CD8-positive, alpha-beta memory T cell (primary cell): ENCODE measurements at regions of chr16 and their contacts with region 1.

Region 1: GRCh38 chr16:28943281-28943680 is 7.5 kb upstream of the NFATC2IP start:
- DNase-seq: no peak
- H3K4me3 ChIP-seq: no peak overlapping the region
- H3K4me3 Mint-ChIP-seq: no peak overlapping the region
- H3K27ac ChIP-seq: no peak overlapping the region
- H3K27ac Mint-ChIP-seq: no peak overlapping the region
- H3K4me1 ChIP-seq: peaks cover 10% of the 10 kb centered on the region
- H3K4me1 Mint-ChIP-seq: peaks cover 8 to 9% (median 8%) of the 10 kb centered on the region in 3 donors
- H3K27me3 ChIP-seq: no peaks in the 10 kb centered on the region
- H3K27me3 Mint-ChIP-seq: peaks cover 0 to 5% of the 10 kb centered on the region in 2 donors

Region 2: DNA sequence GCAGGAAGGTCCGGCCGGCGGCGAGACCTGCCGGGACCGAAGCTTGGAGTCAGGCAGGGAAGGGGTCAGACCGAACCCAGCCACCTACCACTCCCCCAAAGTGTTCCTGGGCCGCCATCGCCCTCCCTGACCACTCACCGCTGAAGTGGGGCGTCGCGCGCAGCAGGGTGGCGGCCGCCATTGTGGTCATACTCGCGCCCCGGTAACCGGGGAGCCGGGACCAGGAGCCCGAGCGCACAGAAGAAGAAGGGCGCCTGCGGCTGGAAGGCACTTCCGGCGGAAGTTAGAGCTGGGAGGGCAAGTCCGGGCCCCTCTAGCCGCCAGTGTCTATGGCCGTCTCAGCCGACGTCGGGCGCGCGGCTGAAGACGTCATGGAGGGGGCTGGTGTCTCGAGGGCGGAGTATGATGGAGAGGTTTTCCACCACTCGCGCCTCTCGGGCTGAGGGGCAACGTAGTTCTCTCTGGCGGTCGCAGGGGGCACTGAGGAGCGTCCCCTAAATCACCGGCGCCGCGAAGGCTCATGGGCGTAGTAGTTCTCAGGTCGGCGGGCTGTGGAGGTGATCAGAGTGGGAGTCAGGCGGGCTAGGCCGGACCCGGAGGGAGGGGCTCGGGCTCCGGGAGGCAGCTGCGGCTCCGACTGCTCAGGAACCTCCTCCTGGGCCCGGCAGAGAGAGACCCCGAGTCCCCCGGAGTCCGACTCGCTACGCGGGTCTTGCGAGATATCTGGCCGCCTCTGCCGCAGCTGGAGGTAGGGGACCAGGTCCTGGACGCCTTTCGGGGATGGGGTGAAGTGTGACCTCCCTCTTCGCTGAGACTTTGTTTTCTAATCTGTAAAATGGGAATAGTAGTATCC is 97.0 kb before region 1 on chr16 and contains the start of gene TUFM:
- CTCF ChIA-PET with region 1: interaction called, 13 read pairs
- POLR2A ChIA-PET with region 1: interaction called, 5 read pairs
- DNase-seq: peak; percentile 96 to 99 (median 98)
- H3K4me3 ChIP-seq: peak within 1 kb of the TSS; percentile 90
- H3K4me3 Mint-ChIP-seq: peak within 1 kb of the TSS; percentile 90 to 95 (median 94)
- H3K27ac ChIP-seq: peak within 1 kb of the TSS; percentile 89
- H3K27ac Mint-ChIP-seq: peak within 1 kb of the TSS; percentile 84 to 99 (median 94)
- H3K4me1 ChIP-seq: peaks cover 26% of the 10 kb centered on the region
- H3K4me1 Mint-ChIP-seq: peaks cover 28 to 41% (median 30%) of the 10 kb centered on the region in 3 donors
- H3K27me3 ChIP-seq: no peaks in the 10 kb centered on the region
- H3K27me3 Mint-ChIP-seq: no peaks in the 10 kb centered on the region
- total RNA-seq, gene TUFM: 320 to 347 TPM

Region 3: GRCh38 chr16:28879841-28880588 is 63.3 kb before region 1 on chr16:
- CTCF ChIA-PET with region 1: interaction called, 10 read pairs
- POLR2A ChIA-PET with region 1: no interaction called
- DNase-seq: peak; percentile 75 to 92 (median 83)
- H3K4me3 ChIP-seq: peak overlapping the region; percentile 87
- H3K4me3 Mint-ChIP-seq: peak overlapping the region; percentile 85 to 95 (median 87)
- H3K27ac ChIP-seq: peak overlapping the region; percentile 61
- H3K27ac Mint-ChIP-seq: peak overlapping the region in 3 of 8 donors; percentile 33 to 55 (median 45)
- H3K4me1 ChIP-seq: peaks cover 14% of the 10 kb centered on the region
- H3K4me1 Mint-ChIP-seq: peaks cover 12 to 18% (median 14%) of the 10 kb centered on the region in 3 donors
- H3K27me3 ChIP-seq: no peaks in the 10 kb centered on the region
- H3K27me3 Mint-ChIP-seq: peaks cover 0 to 2% of the 10 kb centered on the region in 2 donors

Region 4: GRCh38 chr16:28910086-28911031 is 32.9 kb before region 1 on chr16:
- CTCF ChIA-PET with region 1: interaction called, 10 read pairs
- POLR2A ChIA-PET with region 1: no interaction called
- DNase-seq: no peak
- H3K4me3 ChIP-seq: no peak overlapping the region
- H3K4me3 Mint-ChIP-seq: no peak overlapping the region
- H3K27ac ChIP-seq: no peak overlapping the region
- H3K27ac Mint-ChIP-seq: no peak overlapping the region
- H3K4me1 ChIP-seq: no peaks in the 10 kb centered on the region
- H3K4me1 Mint-ChIP-seq: peaks cover 0 to 3% (median 0%) of the 10 kb centered on the region in 3 donors
- H3K27me3 ChIP-seq: no peaks in the 10 kb centered on the region
- H3K27me3 Mint-ChIP-seq: no peaks in the 10 kb centered on the region